ENCODE measurements at regions of chr9 and their contacts with region 1.

Region 1: DNA sequence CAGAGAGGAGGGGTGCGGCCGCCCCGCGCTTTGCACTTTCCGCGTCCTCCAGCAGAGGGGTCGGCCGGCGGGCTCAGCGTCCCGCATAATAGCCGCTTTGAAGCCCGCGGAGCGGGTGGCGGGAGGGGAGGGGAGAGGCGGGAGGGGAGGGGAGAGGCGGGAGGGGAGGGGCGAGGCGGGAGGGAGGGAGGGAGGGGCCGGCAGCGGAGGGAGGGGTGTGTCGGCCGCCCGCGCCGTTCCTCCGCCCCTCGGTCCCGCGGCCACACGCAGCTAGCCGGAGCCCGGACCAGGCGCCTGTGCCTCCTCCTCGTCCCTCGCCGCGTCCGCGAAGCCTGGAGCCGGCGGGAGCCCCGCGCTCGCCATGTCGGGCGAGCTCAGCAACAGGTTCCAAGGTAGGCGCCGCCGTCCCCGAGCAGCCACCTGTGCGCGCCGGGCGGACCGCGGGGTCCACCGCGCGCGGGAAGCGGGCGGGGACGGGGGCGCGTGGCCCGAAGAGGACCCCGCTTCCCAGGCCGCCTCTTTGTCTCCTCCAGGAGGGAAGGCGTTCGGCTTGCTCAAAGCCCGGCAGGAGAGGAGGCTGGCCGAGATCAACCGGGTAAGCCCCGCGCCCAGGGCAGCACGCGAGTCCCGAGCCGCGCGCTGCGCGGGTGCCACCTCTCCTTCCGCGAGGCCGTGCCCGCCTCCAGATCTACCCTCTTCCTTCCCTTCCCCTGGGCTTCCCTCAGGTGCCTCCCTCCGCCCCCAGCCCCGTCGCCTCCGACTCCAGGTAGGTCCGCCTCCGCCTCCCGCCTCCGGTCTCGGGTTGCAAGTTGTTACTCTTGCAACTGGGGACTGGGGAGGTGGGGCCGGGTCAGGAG is at the start of gene AIF1L:
- DNase-seq: peak; percentile 40 to 96 (median 69)

Region 2: DNA sequence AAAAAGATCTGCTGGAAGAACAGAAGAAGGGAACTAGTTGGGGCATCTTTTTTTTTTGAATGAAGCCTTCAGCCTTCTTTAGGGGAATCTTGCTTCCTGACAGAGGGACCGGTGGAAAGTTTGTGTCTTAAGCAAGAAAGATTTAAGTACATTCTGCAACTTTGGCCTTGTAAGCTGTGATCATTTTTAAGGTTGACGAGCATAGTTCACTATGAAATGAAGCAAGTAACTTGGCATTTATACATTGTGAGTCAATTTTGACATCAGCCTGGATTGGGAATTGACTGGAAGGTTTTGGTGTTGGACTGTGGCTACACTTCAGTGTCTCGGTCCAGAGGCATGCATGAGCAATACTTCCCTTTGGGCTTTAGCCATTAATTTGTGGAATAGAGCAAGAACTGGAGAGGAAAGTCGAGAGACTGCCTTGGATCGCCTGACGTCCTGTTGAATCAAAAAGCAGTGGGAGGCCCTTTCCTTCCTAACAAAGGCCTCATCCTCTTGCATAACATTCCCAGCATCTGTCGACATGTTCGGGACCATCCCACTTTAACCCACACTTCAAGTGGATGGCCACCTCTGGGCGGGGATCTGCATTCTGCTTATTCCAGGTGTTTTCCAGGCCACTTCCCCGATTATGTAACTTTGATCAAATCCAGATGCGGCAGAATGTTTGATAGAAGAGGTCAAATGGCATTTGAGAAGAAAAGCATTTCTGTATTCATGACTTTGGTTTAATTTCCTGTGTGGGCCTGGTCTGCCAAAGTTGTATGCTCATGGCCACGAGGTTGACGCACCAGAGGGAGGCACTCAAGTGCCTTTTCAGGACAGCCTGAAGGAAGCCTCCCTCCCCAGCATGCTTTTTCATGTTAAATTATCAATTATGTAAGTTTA is 248.9 kb before region 1 on chr9:
- intact Hi-C with region 1: no loop called
- DNase-seq: no peak

Region 3: GRCh38 chr9:131111854-131112311 is 15.4 kb after region 1 on chr9:
- intact Hi-C with region 1: loop called (anchors 1 kb)
- DNase-seq: peak; percentile 83 to 99 (median 92)